ENCODE measurements at regions of chr2 and their contacts with region 1.

Region 1: DNA sequence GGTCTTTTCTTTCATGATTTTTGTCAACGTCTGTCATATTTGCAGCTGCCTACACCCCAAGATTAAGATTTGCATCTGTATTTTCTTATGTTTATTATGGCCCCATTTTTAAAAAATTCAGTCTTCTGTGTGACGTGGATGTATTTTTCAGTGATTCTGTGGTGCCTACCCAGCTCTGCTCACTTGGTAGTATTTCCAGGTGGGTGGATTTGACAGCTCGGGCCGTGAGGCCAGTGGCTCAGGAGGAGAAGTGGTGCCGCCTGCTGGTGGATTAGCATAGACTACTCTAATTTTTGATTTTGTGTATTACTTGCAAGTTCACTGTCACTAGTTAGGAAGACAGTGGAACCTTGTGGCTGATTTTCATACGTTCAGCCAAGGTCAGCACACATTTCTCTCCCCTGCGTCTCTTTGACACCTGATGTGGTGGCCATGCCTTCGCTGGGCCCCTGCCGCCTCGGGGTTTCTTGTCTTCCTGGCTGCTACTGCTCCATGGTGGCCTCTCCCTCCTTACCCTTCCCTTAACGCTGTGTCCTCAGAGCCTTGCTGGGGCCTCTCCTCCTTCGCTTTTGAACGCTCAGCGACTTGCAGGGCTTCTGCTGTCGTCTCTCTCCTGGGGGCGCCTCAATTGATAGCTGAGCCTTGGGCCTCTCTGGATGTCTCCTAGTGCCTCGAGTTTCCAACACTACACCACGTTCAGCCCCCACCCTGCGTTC is 89.3 kb downstream of the DGKD start:
- DNase-seq: peak; percentile 91
- H3K4me3 Mint-ChIP-seq: no peak overlapping the region
- H3K27ac Mint-ChIP-seq: peak overlapping the region; percentile 88
- H3K4me1 Mint-ChIP-seq: peaks cover 32% of the 10 kb centered on the region
- H3K27me3 Mint-ChIP-seq: no peaks in the 10 kb centered on the region

Region 2: GRCh38 chr2:233404222-233404621 is 39.4 kb before region 1 on chr2:
- CTCF ChIA-PET with region 1: interaction called, 196 read pairs
- DNase-seq: peak; percentile 85
- H3K4me3 Mint-ChIP-seq: no peak overlapping the region
- H3K27ac Mint-ChIP-seq: peak overlapping the region; percentile 46
- H3K4me1 Mint-ChIP-seq: peaks cover 72% of the 10 kb centered on the region
- H3K27me3 Mint-ChIP-seq: no peaks in the 10 kb centered on the region

Region 3: GRCh38 chr2:233413559-233414272 is 29.9 kb before region 1 on chr2:
- CTCF ChIA-PET with region 1: interaction called, 196 read pairs
- DNase-seq: no peak
- H3K4me3 Mint-ChIP-seq: no peak overlapping the region
- H3K27ac Mint-ChIP-seq: no peak overlapping the region
- H3K4me1 Mint-ChIP-seq: peaks cover 91% of the 10 kb centered on the region
- H3K27me3 Mint-ChIP-seq: no peaks in the 10 kb centered on the region

Region 4: DNA sequence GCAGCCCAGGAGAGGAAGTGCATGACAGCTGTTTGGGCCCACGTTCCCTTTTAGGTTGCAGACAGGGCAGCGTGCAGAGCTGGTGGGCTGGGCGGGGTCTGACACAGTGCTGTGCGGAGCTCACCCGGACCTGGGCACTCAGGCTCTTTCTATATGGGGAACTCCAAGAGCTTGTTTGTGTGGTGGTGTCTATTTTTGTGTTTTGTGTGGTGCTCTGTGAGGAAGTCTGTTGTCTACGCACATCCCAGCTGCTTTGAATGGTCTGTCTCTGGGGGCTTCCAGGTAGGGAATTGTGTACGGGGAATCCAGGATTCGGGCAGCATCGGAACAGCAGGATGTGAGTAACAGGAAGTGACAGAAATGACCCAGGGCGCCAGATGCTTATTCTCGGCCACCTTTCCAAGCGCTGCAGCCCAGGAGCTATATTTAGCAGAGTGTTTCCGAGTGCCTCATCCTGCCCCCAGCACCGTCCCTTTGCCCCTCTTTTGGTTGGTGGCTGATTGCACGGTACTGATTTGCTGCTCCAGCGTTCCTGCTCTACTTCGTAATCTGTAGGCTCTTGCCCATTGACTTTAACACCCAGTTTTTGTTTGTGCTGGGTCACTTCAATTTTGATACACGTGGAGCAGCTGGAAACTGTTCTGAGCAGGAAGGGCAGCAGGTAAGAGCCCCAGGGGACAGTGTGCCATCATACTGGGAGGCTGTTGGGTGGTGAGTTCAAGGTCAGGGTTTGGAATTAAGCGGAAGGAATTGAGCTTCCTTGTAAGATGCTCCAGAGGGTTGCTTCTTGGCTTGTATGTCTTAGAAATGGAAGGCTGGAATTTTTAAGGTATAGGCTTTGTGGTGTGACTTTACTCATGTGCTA is 24.6 kb before region 1 on chr2:
- CTCF ChIA-PET with region 1: interaction called, 23 read pairs
- DNase-seq: peak; percentile 72
- H3K4me3 Mint-ChIP-seq: peak overlapping the region; percentile 83
- H3K27ac Mint-ChIP-seq: peak overlapping the region; percentile 98
- H3K4me1 Mint-ChIP-seq: peaks cover 99% of the 10 kb centered on the region
- H3K27me3 Mint-ChIP-seq: no peaks in the 10 kb centered on the region

Measured in activated naive CD4-positive, alpha-beta T cell treated with anti-CD3 and anti-CD28 coated beads, Interleukin-2, amount 10 ng/mL, durations not matched to agents 7 days and 5 days (primary cell).